GM12878 (cell line): ENCODE measurements at regions of chr14 and their contacts with region 1.

Region 1: DNA sequence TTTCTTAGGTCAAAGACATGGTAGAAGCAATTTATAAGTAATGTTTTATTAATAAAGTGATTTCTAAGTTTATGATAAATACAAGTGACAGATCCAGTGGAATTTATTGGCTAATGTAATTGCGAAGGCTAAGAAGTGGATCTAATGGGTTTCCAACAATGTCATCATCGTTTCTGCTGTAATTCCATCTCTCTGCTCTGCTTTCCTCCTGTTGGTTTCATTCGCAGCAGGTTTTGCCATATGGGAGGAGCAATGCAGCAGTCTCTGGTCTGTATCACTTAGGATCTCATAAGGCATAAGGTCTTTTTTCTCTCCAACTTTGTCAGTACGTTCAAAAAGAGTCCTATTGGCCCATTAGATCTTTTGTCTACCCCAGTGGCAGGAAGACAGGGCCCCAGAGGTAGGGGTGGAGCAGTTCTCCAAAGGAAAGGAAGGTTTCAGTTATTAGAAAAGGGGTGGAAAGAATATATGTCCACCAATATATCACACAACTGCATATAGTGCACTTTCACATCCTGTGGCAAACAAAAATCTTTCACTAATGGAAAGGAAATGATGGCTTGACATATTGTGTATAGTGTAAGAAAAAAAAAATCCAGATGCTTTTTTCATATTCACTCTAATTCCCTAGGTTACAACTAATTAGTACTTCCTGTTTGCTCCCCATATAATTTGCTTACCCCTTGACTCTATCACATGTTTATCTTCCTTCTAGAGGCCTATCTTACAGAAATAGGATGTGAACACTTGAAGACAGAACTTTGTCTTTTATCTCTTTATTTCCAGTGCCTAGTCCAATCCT is 451.3 kb downstream of the ZFP36L1 start:
- DNase-seq: peak; percentile 71
- ATAC-seq: peak; percentile 87
- H3K4me3 ChIP-seq: no peak overlapping the region
- H3K27ac ChIP-seq: peak overlapping the region; percentile 75
- H3K4me1 ChIP-seq: peaks cover 44% of the 10 kb centered on the region
- H3K27me3 ChIP-seq: no peaks in the 10 kb centered on the region
- CTCF ChIP-seq: no peak
- EP300 ChIP-seq: peak; percentile 61 to 76; a peak in 2 of 4 replicates
- POLR2A ChIP-seq: no peak
- RAD21 ChIP-seq: no peak

Region 2: DNA sequence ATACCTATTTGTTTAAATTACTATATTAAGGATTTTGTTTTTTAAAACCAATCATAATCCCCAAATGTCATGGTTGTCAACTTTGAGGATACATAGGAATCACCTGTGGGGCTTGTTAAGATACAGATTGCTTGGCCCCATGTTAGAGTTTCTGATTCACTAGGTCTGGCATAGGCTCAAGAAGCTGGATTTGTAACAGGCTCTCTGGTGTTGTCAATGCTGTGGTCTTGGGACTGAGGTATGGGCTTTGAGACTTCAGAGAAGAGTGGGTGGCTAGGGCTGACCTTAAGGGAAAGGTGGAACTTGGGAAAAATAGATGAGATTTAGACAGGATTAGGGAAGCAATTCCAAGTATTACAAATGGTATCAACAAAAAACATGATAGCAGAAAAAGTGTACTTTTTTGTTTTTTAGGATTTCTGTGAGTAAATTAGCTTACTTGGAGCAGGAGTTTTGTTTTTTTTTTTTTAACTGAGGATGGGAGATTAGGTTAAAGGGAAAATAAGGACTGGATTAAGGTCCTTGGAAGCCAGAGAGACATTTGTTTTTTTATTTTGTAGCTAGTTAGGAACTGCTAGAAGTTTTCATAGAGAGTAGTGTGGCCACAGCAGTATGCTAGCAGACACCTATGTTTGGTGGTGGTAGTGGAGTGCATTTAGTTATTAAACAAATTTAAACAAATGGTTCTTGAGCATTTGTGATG is 433.4 kb before region 1 on chr14:
- CTCF ChIA-PET with region 1: no interaction called
- POLR2A ChIA-PET with region 1: no interaction called
- RAD21 ChIA-PET with region 1: no interaction called
- SMC1A ChIA-PET with region 1: no interaction called
- in situ Hi-C with region 1: no loop called
- intact Hi-C with region 1: no loop called
- DNase-seq: no peak
- ATAC-seq: no peak
- H3K4me3 ChIP-seq: no peak overlapping the region
- H3K27ac ChIP-seq: no peak overlapping the region
- H3K4me1 ChIP-seq: no peaks in the 10 kb centered on the region
- H3K27me3 ChIP-seq: no peaks in the 10 kb centered on the region
- CTCF ChIP-seq: no peak
- EP300 ChIP-seq: no peak
- POLR2A ChIP-seq: no peak
- RAD21 ChIP-seq: no peak

Region 3: DNA sequence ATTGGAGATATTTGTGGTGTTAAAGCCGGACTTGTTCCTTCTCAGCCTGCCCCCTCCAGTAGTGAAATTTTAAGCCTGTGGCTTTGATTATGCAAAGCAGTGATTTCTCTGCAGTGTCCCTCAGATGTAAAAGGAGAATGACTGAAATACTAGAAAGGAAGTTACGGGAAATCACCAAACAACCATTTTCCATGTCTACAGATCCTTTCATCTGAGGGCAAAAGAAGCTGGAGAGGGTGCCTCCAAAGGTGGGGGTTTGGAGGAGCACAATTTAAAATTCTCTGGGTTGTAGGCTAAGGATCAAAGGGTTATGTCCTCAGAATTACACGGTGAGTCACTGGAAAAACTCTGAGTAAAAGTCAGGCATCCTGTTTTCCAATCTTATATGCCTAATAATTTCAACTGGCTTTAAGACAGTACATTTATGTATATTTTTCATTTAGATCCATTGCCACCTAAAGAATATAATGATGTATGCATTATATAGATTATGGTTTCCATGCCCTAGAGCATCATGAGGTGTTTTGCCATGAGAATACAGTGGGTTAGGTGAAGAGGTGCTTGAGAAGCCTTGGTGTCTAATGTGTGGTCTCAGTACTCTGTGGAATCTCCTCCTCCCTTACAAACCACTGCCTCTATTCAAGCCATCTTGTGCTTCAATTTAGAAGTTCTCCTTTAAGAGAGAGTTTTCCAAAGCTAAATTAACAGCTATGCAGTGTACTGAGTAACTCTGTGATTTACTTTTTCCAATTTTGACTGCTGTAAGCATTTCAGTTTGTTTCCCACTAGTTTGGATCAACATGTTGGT is 159.9 kb before region 1 on chr14:
- CTCF ChIA-PET with region 1: no interaction called
- POLR2A ChIA-PET with region 1: no interaction called
- RAD21 ChIA-PET with region 1: no interaction called
- SMC1A ChIA-PET with region 1: no interaction called
- in situ Hi-C with region 1: no loop called
- intact Hi-C with region 1: no loop called
- DNase-seq: peak; percentile 48
- ATAC-seq: peak; percentile 79
- H3K4me3 ChIP-seq: peak overlapping the region; percentile 47
- H3K27ac ChIP-seq: peak overlapping the region; percentile 56
- H3K4me1 ChIP-seq: peaks cover 21% of the 10 kb centered on the region
- H3K27me3 ChIP-seq: no peaks in the 10 kb centered on the region
- CTCF ChIP-seq: no peak
- EP300 ChIP-seq: no peak
- POLR2A ChIP-seq: no peak
- RAD21 ChIP-seq: no peak

Region 4: DNA sequence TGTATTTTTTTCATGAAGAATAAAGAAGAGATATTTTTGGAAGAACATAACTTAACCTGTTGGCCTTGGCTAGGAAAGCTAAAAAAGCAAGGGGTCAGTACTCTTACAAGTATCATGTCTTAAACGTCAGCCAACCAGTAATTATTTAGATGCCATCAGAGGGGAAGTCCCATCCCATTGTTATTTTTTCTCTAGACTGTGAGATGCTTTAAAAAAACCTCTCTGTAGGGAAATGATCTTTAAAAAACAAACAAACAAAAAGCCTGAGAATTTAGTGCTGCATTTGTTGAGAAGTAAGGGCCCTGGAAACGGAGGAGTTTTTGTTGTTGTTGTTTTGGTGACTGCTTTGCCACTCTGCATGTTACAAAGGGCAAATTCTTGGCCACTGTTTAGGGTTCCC is 22.8 kb before region 1 on chr14:
- CTCF ChIA-PET with region 1: interaction called, 3 read pairs
- POLR2A ChIA-PET with region 1: interaction called, 5 read pairs
- RAD21 ChIA-PET with region 1: interaction called, 4 read pairs
- SMC1A ChIA-PET with region 1: interaction called, 44 read pairs
- in situ Hi-C with region 1: no loop called
- intact Hi-C with region 1: no loop called
- DNase-seq: no peak
- ATAC-seq: peak; percentile 49
- H3K4me3 ChIP-seq: no peak overlapping the region
- H3K27ac ChIP-seq: no peak overlapping the region
- H3K4me1 ChIP-seq: peaks cover 54% of the 10 kb centered on the region
- H3K27me3 ChIP-seq: no peaks in the 10 kb centered on the region
- CTCF ChIP-seq: no peak; a peak in 1 of 6 replicates
- EP300 ChIP-seq: peak in 1 of 2 experiments; percentile 23; a peak in 1 of 4 replicates
- POLR2A ChIP-seq: no peak
- RAD21 ChIP-seq: no peak

Region 5: DNA sequence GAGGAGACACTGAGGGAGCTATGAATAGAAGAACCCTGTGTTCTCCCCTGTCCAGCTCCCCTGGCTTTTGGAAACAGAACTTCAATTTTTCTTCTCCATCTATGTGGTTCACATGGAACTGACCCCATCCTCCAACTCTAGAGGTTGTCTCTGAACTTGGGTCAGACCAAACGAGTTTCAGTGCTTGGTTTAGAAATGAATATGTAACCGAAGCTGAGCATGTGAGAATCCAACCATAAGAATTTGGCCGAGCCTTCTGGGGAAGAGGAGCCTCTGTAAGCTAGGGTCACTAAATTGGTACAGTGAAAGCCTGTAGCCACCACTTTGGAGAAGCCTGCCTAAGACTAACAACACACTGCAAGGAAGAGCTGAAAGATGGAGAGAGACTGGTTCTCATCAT is 13.1 kb before region 1 on chr14:
- CTCF ChIA-PET with region 1: interaction called, 6 read pairs
- POLR2A ChIA-PET with region 1: interaction called, 12 read pairs
- RAD21 ChIA-PET with region 1: interaction called, 4 read pairs
- SMC1A ChIA-PET with region 1: interaction called, 22 read pairs
- in situ Hi-C with region 1: no loop called
- intact Hi-C with region 1: loop called (anchors 1 kb)
- DNase-seq: no peak
- ATAC-seq: peak; percentile 85
- H3K4me3 ChIP-seq: no peak overlapping the region
- H3K27ac ChIP-seq: peak overlapping the region; percentile 64
- H3K4me1 ChIP-seq: peaks cover 36% of the 10 kb centered on the region
- H3K27me3 ChIP-seq: no peaks in the 10 kb centered on the region
- CTCF ChIP-seq: no peak
- EP300 ChIP-seq: peak in 1 of 2 experiments; percentile 44; a peak in 1 of 4 replicates
- POLR2A ChIP-seq: no peak
- RAD21 ChIP-seq: peak; percentile 30; the same call in 1 of the 2 replicates